GM18951 (cell line): ENCODE measurements at regions of chr6 and their contacts with region 1.

Region 1: GRCh38 chr6:29834564-29835436 is 7.2 kb downstream of the HLA-G start:
- POLR2A ChIP-seq: no peak

Region 2: GRCh38 chr6:29319931-29320330 is 514.9 kb before region 1 on chr6:
- in situ Hi-C with region 1: no loop called
- POLR2A ChIP-seq: no peak

Region 3: GRCh38 chr6:29419516-29419915 is 415.3 kb before region 1 on chr6:
- in situ Hi-C with region 1: no loop called
- POLR2A ChIP-seq: no peak

Region 4: DNA sequence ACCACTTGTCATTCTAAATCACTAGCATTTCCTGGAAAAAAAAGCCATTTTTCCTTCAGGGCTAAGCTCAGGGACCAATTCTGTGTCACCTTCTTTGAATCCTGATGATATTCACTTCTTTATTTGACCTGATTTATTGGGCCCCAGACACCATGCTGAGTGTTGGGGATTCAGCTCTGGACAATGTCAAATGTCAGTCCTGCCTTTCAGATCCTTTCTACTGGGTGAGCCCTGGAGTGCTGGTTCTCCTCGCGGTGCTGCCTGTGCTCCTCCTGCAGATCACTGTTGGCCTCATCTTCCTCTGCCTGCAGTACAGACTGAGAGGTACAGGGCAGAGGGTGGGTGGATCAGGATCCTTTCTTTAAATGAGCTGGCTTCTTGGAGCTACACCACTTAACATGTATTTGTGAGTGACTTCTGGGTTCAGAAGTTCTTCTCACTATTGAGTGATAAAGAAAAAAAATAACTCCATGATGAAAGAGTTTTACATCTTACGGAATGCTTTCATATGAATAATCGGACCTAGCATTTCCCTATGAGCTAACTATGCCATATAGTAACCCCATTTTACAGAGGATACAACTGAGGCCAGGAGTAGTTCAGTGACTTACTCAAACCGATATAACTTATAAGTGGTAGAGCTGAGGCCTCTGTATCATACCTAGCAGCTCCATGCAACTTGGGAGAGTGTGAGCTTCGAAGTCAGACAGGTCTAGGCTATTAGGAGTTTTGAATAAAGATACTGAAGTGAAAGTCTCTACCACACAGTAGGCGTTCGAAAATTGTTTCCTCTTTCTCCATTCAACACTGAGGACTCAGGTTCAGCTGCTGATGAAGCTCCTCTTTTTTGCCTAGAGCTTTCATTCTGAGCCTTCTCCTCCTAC is 168.6 kb before region 1 on chr6:
- in situ Hi-C with region 1: no loop called
- POLR2A ChIP-seq: no peak

Region 5: GRCh38 chr6:29702519-29703103 is 132.2 kb before region 1 on chr6:
- in situ Hi-C with region 1: loop called (anchors 5 kb)
- POLR2A ChIP-seq: no peak